ENCODE measurements at regions of chr5 and their contacts with region 1.

Region 1: GRCh38 chr5:65084795-65085515 is 316.2 kb downstream of the CWC27 start:
- DNase-seq: no peak
- H3K4me3 ChIP-seq: no peak overlapping the region
- CTCF ChIP-seq: no peak

Region 2: GRCh38 chr5:64980176-64980575 is 104.8 kb before region 1 on chr5:
- in situ Hi-C with region 1: loop called (anchors 5 kb)
- DNase-seq: no peak
- H3K4me3 ChIP-seq: no peak overlapping the region
- CTCF ChIP-seq: no peak

Measured in astrocyte of the cerebellum (primary cell).